CD8-positive, alpha-beta memory T cell (primary cell): ENCODE measurements at regions of chr19 and their contacts with region 1.

Region 1: GRCh38 chr19:984165-984967 is at the start of gene WDR18:
- DNase-seq: peak; percentile 75 to 92 (median 84)
- H3K4me3 ChIP-seq: peak within 1 kb of the TSS; percentile 76
- H3K4me3 Mint-ChIP-seq: peak within 1 kb of the TSS; percentile 89 to 98 (median 93)
- H3K27ac ChIP-seq: peak within 1 kb of the TSS; percentile 87
- H3K27ac Mint-ChIP-seq: peak within 1 kb of the TSS; percentile 85 to 96 (median 92)
- H3K4me1 ChIP-seq: peaks cover 18% of the 10 kb centered on the region
- H3K4me1 Mint-ChIP-seq: peaks cover 15 to 30% (median 24%) of the 10 kb centered on the region in 3 donors
- H3K27me3 ChIP-seq: no peaks in the 10 kb centered on the region
- H3K27me3 Mint-ChIP-seq: no peaks in the 10 kb centered on the region
- total RNA-seq, gene WDR18: 108 to 133 TPM

Region 2: GRCh38 chr19:771332-771785 is 213.0 kb before region 1 on chr19:
- CTCF ChIA-PET with region 1: interaction called, 14 read pairs
- POLR2A ChIA-PET with region 1: no interaction called
- DNase-seq: peak in 1 of 5 donors; percentile 13
- H3K4me3 ChIP-seq: no peak overlapping the region
- H3K4me3 Mint-ChIP-seq: no peak overlapping the region
- H3K27ac ChIP-seq: no peak overlapping the region
- H3K27ac Mint-ChIP-seq: no peak overlapping the region
- H3K4me1 ChIP-seq: no peaks in the 10 kb centered on the region
- H3K4me1 Mint-ChIP-seq: peaks cover 3 to 4% (median 4%) of the 10 kb centered on the region in 3 donors
- H3K27me3 ChIP-seq: no peaks in the 10 kb centered on the region
- H3K27me3 Mint-ChIP-seq: peaks cover 8 to 10% of the 10 kb centered on the region in 2 donors

Region 3: GRCh38 chr19:913080-913748 is 71.2 kb before region 1 on chr19 and contains the start of gene R3HDM4:
- CTCF ChIA-PET with region 1: no interaction called
- POLR2A ChIA-PET with region 1: interaction called, 18 read pairs
- DNase-seq: peak; percentile 81 to 90 (median 83)
- H3K4me3 ChIP-seq: peak within 1 kb of the TSS; percentile 82
- H3K4me3 Mint-ChIP-seq: peak within 1 kb of the TSS; percentile 80 to 93 (median 86)
- H3K27ac ChIP-seq: peak within 1 kb of the TSS; percentile 89
- H3K27ac Mint-ChIP-seq: peak within 1 kb of the TSS; percentile 85 to 98 (median 90)
- H3K4me1 ChIP-seq: peaks cover 32% of the 10 kb centered on the region
- H3K4me1 Mint-ChIP-seq: peaks cover 23 to 39% (median 25%) of the 10 kb centered on the region in 3 donors
- H3K27me3 ChIP-seq: peaks cover 4% of the 10 kb centered on the region
- H3K27me3 Mint-ChIP-seq: peaks cover 2 to 9% of the 10 kb centered on the region in 2 donors
- total RNA-seq, gene R3HDM4: 60.7 to 65.2 TPM

Region 4: GRCh38 chr19:925526-926322 is 58.6 kb before region 1 on chr19 and contains the start of gene ARID3A:
- CTCF ChIA-PET with region 1: interaction called, 116 read pairs
- POLR2A ChIA-PET with region 1: interaction called, 18 read pairs
- DNase-seq: peak; percentile 60 to 82 (median 74)
- H3K4me3 ChIP-seq: peak within 1 kb of the TSS; percentile 84
- H3K4me3 Mint-ChIP-seq: peak within 1 kb of the TSS; percentile 76 to 92 (median 83)
- H3K27ac ChIP-seq: peak within 1 kb of the TSS; percentile 74
- H3K27ac Mint-ChIP-seq: peak within 1 kb of the TSS in 7 of 8 donors; percentile 21 to 91 (median 76)
- H3K4me1 ChIP-seq: peaks cover 18% of the 10 kb centered on the region
- H3K4me1 Mint-ChIP-seq: peaks cover 4 to 30% (median 15%) of the 10 kb centered on the region in 3 donors
- H3K27me3 ChIP-seq: no peaks in the 10 kb centered on the region
- H3K27me3 Mint-ChIP-seq: no peaks in the 10 kb centered on the region
- total RNA-seq, gene ARID3A: 12.8 to 15.9 TPM

Region 5: DNA sequence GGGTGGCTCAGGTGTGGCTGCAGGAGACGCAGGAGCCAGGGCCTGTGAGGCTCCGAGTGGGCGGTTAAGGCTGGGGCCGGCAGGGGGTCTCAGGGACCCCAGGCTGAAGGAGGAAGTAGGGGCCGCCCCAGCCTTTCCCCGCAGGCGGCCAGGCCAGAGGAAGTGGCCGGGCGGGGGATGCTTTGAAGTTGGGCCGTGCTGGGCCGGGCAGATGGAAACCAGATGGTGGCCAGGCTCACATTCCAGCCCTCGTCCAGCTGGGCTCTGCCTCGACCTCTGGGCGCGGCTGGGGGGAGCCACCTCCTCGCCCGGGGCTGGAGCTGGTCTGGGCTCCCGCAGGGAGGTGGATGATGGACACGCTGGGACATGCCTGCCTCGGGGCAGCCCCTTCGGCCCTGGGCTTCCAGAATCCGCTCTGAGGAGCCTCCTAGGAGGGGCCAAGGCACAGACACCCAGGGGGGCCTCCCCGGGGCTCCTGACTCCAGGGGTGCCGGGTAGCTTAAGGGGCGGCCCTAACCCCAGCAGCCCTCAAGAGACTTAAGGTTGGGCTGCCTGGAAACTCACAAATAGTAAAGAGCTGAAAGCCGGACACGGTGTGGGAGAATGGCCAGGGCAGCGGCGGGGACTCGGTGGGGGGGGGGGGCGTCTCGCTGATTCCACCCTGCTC is 51.0 kb before region 1 on chr19:
- CTCF ChIA-PET with region 1: interaction called, 12 read pairs
- POLR2A ChIA-PET with region 1: interaction called, 4 read pairs
- DNase-seq: no peak
- H3K4me3 ChIP-seq: no peak overlapping the region
- H3K4me3 Mint-ChIP-seq: peak overlapping the region in 3 of 7 donors; percentile 19 to 82 (median 78)
- H3K27ac ChIP-seq: no peak overlapping the region
- H3K27ac Mint-ChIP-seq: no peak overlapping the region
- H3K4me1 ChIP-seq: peaks cover 16% of the 10 kb centered on the region
- H3K4me1 Mint-ChIP-seq: peaks cover 16 to 29% (median 17%) of the 10 kb centered on the region in 3 donors
- H3K27me3 ChIP-seq: no peaks in the 10 kb centered on the region
- H3K27me3 Mint-ChIP-seq: no peaks in the 10 kb centered on the region

Region 6: GRCh38 chr19:973726-974562 is 10.4 kb before region 1 on chr19:
- CTCF ChIA-PET with region 1: no interaction called
- POLR2A ChIA-PET with region 1: no interaction called
- DNase-seq: no peak
- H3K4me3 ChIP-seq: no peak overlapping the region
- H3K4me3 Mint-ChIP-seq: no peak overlapping the region
- H3K27ac ChIP-seq: no peak overlapping the region
- H3K27ac Mint-ChIP-seq: no peak overlapping the region
- H3K4me1 ChIP-seq: no peaks in the 10 kb centered on the region
- H3K4me1 Mint-ChIP-seq: no peaks in the 10 kb centered on the region
- H3K27me3 ChIP-seq: no peaks in the 10 kb centered on the region
- H3K27me3 Mint-ChIP-seq: no peaks in the 10 kb centered on the region

Region 7: GRCh38 chr19:996051-996838 is 11.9 kb after region 1 on chr19:
- CTCF ChIA-PET with region 1: interaction called, 6 read pairs
- POLR2A ChIA-PET with region 1: interaction called, 24 read pairs
- DNase-seq: peak; percentile 86 to 94 (median 90)
- H3K4me3 ChIP-seq: peak overlapping the region; percentile 34
- H3K4me3 Mint-ChIP-seq: peak overlapping the region; percentile 67 to 86 (median 76)
- H3K27ac ChIP-seq: no peak overlapping the region
- H3K27ac Mint-ChIP-seq: peak overlapping the region; percentile 85 to 99 (median 93)
- H3K4me1 ChIP-seq: peaks cover 26% of the 10 kb centered on the region
- H3K4me1 Mint-ChIP-seq: peaks cover 6 to 37% (median 13%) of the 10 kb centered on the region in 3 donors
- H3K27me3 ChIP-seq: peaks cover 21% of the 10 kb centered on the region
- H3K27me3 Mint-ChIP-seq: peaks cover 3 to 22% of the 10 kb centered on the region in 2 donors

Region 8: GRCh38 chr19:1020868-1021425 is 36.6 kb after region 1 on chr19 and contains the start of gene TMEM259:
- CTCF ChIA-PET with region 1: interaction called, 15 read pairs
- POLR2A ChIA-PET with region 1: interaction called, 4 read pairs
- DNase-seq: peak; percentile 96 to 99 (median 98)
- H3K4me3 ChIP-seq: peak within 1 kb of the TSS; percentile 71
- H3K4me3 Mint-ChIP-seq: peak within 1 kb of the TSS; percentile 76 to 95 (median 89)
- H3K27ac ChIP-seq: peak within 1 kb of the TSS; percentile 97
- H3K27ac Mint-ChIP-seq: peak within 1 kb of the TSS; percentile 98 to 100 (median 99)
- H3K4me1 ChIP-seq: peaks cover 59% of the 10 kb centered on the region
- H3K4me1 Mint-ChIP-seq: peaks cover 24 to 60% (median 44%) of the 10 kb centered on the region in 3 donors
- H3K27me3 ChIP-seq: no peaks in the 10 kb centered on the region
- H3K27me3 Mint-ChIP-seq: peaks cover 0 to 6% of the 10 kb centered on the region in 2 donors
- total RNA-seq, gene TMEM259: 151 to 157 TPM

Region 9: DNA sequence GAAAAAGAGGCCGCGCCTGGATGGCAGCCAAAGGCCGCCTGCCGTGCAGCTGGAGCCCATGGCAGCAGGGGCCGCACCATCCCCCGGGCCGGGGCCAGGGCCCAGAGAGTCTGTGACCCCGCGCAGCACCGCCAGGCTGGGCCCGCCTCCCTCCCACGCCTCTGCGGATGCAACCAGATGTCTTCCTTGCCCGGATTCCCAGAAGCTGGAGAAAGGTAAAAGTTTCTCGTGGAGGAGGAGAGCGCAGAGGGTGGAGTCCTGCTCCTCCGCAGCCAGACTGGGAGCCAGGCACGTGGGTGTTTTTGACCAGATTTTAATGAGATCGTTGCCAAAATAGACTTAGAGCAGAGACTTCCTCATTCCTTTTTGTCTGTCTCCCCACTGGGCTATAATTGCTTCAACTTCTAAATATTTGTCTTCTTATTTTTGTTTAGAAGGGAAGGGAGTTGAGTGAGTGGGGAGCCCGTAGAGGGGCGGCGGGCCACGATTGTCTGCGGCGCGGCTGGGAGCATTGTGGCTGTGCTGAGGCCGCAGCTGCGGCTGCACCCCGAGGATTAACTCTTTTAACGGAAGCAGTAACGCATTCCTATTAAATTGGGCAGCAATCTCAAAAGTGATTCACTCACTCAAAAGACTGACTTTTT is 376.6 kb after region 1 on chr19:
- CTCF ChIA-PET with region 1: no interaction called
- POLR2A ChIA-PET with region 1: no interaction called
- DNase-seq: no peak
- H3K4me3 ChIP-seq: no peak overlapping the region
- H3K4me3 Mint-ChIP-seq: no peak overlapping the region
- H3K27ac ChIP-seq: no peak overlapping the region
- H3K27ac Mint-ChIP-seq: no peak overlapping the region
- H3K4me1 ChIP-seq: peaks cover 15% of the 10 kb centered on the region
- H3K4me1 Mint-ChIP-seq: peaks cover 23 to 39% (median 38%) of the 10 kb centered on the region in 3 donors
- H3K27me3 ChIP-seq: no peaks in the 10 kb centered on the region
- H3K27me3 Mint-ChIP-seq: peaks cover 0 to 1% of the 10 kb centered on the region in 2 donors